Activated naive CD4-positive, alpha-beta T cell treated with anti-CD3 and anti-CD28 coated beads for 36 hours (primary cell): ENCODE measurements at regions of chr2 and their contacts with region 1.

Region 1: GRCh38 chr2:69694894-69695849 is 46.8 kb upstream of the ANXA4 start:
- DNase-seq: no peak
- H3K4me3 Mint-ChIP-seq: peak overlapping the region; percentile 22
- H3K27ac Mint-ChIP-seq: peak overlapping the region; percentile 18
- H3K4me1 Mint-ChIP-seq: peaks cover 83% of the 10 kb centered on the region
- H3K27me3 Mint-ChIP-seq: no peaks in the 10 kb centered on the region

Region 2: DNA sequence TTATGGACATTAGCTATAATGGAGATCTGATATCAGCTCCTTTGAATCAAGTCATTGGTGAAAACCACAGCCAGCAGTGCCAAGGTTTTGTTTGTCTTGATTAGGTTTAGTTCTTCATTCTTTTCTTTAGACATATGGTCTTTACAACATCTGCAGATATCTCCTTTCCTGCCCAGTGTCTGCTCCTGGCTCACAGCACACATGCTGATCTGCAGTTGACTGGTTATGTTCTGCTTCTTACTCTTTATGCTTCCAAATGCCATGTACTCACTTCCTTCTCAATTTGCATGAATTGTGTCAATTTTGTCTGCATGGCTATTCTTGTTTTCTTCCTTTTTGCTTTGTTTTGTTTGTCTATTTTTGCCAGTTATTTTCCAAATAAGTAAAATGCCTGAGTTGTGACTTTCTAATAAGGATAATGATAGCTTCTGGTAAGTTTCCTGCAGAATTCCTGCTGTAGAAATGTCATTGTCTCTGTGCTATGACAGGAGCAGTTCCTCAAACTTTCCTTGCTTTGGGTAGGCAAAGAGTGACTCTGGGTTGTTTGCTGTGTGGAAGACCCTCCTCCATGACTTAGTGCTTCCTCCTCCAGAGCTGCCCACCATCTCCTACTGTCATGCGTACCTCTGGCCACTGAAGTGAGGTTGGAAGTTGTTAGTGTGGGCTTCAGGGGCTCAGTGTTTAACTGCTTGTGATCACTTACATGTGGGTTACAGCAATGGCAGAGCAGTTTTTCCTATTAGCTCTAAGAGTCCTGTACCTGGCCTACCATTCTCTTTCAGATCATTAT is 952.4 kb before region 1 on chr2:
- CTCF ChIA-PET with region 1: no interaction called
- intact Hi-C with region 1: loop called (anchors 10 kb)
- DNase-seq: peak; percentile 45
- H3K4me3 Mint-ChIP-seq: no peak overlapping the region
- H3K27ac Mint-ChIP-seq: peak overlapping the region; percentile 91
- H3K4me1 Mint-ChIP-seq: peaks cover 93% of the 10 kb centered on the region
- H3K27me3 Mint-ChIP-seq: no peaks in the 10 kb centered on the region

Region 3: GRCh38 chr2:69514406-69514805 is 180.8 kb before region 1 on chr2:
- CTCF ChIA-PET with region 1: no interaction called
- intact Hi-C with region 1: no loop called
- DNase-seq: no peak
- H3K4me3 Mint-ChIP-seq: no peak overlapping the region
- H3K27ac Mint-ChIP-seq: no peak overlapping the region
- H3K4me1 Mint-ChIP-seq: peaks cover 6% of the 10 kb centered on the region
- H3K27me3 Mint-ChIP-seq: no peaks in the 10 kb centered on the region

Region 4: GRCh38 chr2:69559442-69560146 is 135.6 kb before region 1 on chr2:
- CTCF ChIA-PET with region 1: no interaction called
- intact Hi-C with region 1: loop called (anchors 5 kb)
- DNase-seq: no peak
- H3K4me3 Mint-ChIP-seq: no peak overlapping the region
- H3K27ac Mint-ChIP-seq: peak overlapping the region; percentile 34
- H3K4me1 Mint-ChIP-seq: peaks cover 78% of the 10 kb centered on the region
- H3K27me3 Mint-ChIP-seq: no peaks in the 10 kb centered on the region

Region 5: DNA sequence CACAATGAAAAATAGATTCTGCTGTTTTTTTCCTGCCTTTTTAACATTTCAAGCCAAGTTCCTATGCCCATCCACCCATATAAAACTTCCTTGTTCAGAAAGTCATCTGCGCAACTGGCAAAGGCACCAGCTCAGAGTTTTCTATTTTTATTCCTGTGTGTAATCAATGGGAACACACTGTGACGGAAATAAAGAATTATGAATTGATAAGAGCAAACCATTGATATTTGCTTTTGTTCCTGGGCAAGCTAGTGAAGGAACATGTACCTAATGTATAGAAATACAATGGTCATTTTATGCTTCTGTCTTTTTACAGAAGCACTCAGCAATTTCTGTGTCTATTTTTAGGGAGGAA is 20.9 kb before region 1 on chr2:
- CTCF ChIA-PET with region 1: interaction called, 3 read pairs
- intact Hi-C with region 1: loop called (anchors 1 kb)
- DNase-seq: no peak
- H3K4me3 Mint-ChIP-seq: no peak overlapping the region
- H3K27ac Mint-ChIP-seq: no peak overlapping the region
- H3K4me1 Mint-ChIP-seq: peaks cover 28% of the 10 kb centered on the region
- H3K27me3 Mint-ChIP-seq: no peaks in the 10 kb centered on the region

Region 6: DNA sequence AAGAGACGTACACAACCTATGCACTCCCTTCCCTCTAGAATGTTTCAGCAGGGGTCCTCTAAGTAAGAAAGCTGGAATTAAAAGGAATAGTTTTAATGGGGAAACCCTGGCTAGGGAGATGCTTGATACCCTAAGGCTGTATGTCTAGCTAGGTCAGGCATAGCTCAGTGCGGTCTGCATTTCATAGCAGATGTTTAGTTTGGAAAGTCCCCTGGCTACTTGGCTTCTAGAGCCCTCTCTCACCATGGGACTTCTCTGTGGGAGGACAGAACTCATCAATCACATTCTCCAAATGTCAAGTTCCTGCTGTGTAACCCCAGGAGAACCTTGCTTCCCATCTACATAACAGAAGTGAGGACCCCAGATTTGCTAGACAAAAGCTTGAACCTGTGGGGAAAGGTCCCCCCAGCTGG is 22.7 kb after region 1 on chr2:
- CTCF ChIA-PET with region 1: interaction called, 16 read pairs
- intact Hi-C with region 1: no loop called
- DNase-seq: no peak
- H3K4me3 Mint-ChIP-seq: no peak overlapping the region
- H3K27ac Mint-ChIP-seq: no peak overlapping the region
- H3K4me1 Mint-ChIP-seq: peaks cover 6% of the 10 kb centered on the region
- H3K27me3 Mint-ChIP-seq: no peaks in the 10 kb centered on the region